Lower lobe of right lung (tissue), 2 donors: ENCODE measurements at regions of chr5 and their contacts with region 1.

Region 1: DNA sequence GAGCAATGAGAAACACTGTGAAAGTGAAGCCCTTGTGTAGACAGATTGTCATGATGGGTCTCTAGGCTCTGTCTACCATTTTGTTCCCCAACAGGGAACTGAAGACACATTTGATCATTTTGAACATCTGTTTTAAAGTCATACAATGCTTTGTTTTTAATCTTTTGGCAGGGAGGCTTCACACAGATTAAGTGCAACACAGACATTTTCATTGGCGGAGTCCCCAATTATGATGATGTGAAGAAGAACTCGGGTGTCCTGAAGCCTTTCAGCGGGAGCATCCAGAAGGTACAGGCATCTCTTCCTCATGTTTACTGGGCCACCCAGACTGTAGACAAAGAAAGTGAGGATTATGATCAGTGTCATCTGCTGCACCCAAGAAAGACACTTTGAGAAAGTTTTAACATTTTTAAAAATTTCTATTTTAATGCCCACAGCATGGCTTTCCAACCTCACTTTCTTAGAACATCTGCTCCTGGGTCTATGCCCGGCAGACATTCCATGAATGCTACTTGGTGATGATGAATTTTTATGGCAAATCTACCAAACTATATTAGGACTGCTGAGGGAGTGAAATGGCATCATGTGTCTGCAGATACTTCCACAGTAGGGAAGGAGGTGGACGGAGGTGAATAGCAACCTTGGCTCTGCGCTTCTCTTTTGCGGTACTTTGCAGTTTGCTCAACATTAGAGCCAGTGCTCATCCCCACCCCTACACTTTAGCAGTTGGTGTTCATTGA is 121.3 kb downstream of the LIFR start:
- DNase-seq: no peak
- ATAC-seq: no peak
- H3K4me3 ChIP-seq: no peak overlapping the region
- H3K27ac ChIP-seq: no peak overlapping the region
- H3K4me1 ChIP-seq: no peaks in the 10 kb centered on the region
- H3K27me3 ChIP-seq: peaks cover 15% of the 10 kb centered on the region
- CTCF ChIP-seq: no peak

Region 2: GRCh38 chr5:38809388-38810359 is 374.5 kb after region 1 on chr5:
- intact Hi-C with region 1: loop called (anchors 5 kb)
- DNase-seq: peak; percentile 76
- ATAC-seq: peak; percentile 92 to 94
- H3K4me3 ChIP-seq: no peak overlapping the region
- H3K27ac ChIP-seq: no peak overlapping the region
- H3K4me1 ChIP-seq: peaks cover 12% of the 10 kb centered on the region
- H3K27me3 ChIP-seq: no peaks in the 10 kb centered on the region
- CTCF ChIP-seq: peak; percentile 86